ENCODE measurements at regions of chr5 and their contacts with region 1.

Region 1: DNA sequence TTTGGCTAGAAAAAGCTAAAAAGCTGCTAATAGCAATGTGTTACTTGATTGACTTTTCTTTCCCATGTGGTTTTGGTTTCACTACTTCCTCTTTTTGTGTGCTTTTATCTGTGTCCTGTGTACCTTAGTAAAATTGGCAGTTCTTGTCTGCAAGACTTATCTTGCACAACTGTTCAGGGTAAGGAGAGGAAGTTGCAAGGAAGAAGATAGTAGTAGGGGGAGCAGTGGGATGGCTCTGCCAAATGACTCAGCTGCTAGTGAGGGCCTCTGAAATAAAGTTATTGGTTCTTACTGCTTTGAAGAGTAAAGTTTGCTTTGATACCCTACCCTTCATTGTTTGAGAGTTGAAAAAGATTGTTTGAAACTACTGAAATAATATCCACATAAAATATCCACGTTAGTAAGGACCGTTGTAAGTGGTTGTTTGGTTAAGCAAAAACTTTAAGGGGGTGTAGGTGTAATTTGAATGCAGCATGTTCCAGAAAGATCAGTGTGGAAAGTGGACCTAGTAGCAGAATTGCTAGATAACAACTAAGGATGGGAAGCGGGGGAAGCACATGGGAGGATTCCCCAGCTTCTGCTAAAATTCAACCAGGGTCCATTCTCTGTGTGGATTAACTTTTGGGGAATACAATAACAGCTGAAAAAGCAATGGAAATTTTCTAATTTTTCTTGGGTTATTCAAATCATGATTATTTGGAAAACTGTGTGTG is 123.5 kb downstream of the SCAMP1 start:
- DNase-seq: peak; percentile 84 to 92 (median 89)
- H3K4me3 ChIP-seq: peak overlapping the region in 1 of 3 experiments; percentile 37
- H3K4me3 Mint-ChIP-seq: peak overlapping the region in 1 of 2 donors; percentile 65
- H3K27ac ChIP-seq: peak overlapping the region; percentile 19 to 82
- H3K27ac Mint-ChIP-seq: peak overlapping the region; percentile 87 to 94 (median 93)
- H3K4me1 ChIP-seq: peaks cover 39 to 46% of the 10 kb centered on the region in 2 donors
- H3K4me1 Mint-ChIP-seq: peaks cover 51% of the 10 kb centered on the region
- H3K27me3 ChIP-seq: no peaks in the 10 kb centered on the region
- H3K27me3 Mint-ChIP-seq: no peaks in the 10 kb centered on the region
- CTCF ChIP-seq: no peak

Region 2: DNA sequence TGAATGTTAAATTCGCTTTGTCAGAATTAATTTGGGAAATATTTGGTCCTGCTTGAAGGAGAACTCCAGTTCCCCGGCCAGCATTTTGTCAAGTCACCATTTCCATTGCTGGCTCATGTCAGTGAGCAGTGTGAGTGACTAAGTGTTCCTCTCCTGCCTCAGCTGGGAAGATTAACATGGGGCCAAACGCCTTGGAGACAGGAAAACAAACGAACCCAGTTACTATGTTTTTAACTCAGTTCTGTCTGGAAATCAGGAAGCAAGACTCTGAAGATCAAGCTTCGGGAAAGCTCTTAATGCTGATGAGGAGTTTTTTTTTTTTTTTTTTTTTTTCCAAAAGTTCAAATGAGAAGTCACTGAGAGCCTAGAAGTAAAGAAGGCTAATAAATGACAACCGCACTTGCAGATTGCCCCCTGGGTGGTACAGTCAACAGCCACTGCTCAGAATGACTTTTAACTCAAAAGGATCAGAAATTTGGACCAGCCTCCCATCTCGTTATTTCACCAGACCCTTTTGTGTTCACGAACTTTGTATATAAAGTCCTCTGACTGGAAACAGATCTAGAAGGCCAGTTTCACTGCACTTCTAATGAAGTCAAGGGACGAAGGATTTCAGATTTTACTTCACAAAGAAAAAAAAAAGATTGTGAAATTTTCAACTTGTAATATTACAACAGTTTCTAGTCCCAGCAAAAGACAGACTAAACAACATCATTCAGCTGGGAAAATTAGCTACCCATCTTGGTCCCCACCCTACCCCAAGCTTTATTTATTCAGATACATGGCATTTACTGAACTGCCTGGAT is 43.3 kb after region 1 on chr5:
- intact Hi-C with region 1: loop called in 1 of 2 experiments (anchors 5 kb)
- DNase-seq: peak; percentile 91 to 99 (median 98)
- H3K4me3 ChIP-seq: peak overlapping the region in 1 of 3 experiments; percentile 18
- H3K4me3 Mint-ChIP-seq: peak overlapping the region in 1 of 2 donors; percentile 15
- H3K27ac ChIP-seq: peak overlapping the region; percentile 67 to 93
- H3K27ac Mint-ChIP-seq: peak overlapping the region; percentile 93 to 98 (median 96)
- H3K4me1 ChIP-seq: peaks cover 48 to 56% of the 10 kb centered on the region in 2 donors
- H3K4me1 Mint-ChIP-seq: peaks cover 60% of the 10 kb centered on the region
- H3K27me3 ChIP-seq: no peaks in the 10 kb centered on the region
- H3K27me3 Mint-ChIP-seq: peaks cover 0 to 1% (median 1%) of the 10 kb centered on the region in 3 donors
- CTCF ChIP-seq: no peak

Region 3: DNA sequence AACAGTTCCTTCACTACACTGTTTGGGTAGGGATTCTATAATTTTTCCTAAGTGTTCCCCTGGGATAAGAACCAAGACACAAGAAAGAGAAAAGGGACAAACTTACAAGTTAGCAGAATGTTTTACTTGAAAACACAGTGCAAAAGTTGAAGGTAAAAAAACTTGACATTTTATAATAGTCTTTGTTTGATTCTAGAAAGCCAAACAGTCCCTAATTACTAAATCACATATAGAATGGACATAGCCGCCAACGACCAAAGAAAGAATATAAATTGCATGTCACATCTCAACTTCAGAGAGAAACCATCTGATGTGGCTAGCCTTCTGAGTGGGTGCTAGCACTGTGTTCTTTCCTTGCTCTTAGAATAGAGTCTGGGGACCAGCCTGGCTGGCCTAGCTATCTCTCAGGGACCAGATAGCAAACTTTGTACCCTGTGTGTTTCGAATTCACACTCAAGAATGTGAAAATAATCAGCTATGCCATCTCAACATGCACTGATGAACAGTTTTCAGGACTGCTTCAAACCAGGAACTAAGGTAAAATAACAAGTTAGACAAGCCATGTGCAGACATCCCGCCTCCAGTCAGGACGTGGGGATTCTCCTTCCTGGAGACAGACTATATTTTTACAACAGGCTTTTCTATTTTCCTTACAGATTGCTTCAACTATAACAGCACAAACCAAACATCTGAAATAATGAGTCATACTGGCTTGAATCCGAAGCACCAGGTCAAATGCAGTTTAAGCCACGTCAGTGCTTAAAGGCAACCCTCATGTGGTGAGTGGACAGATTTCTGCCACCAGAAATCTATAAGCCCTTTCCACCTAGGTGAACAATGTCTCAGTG is 110.9 kb after region 1 on chr5:
- intact Hi-C with region 1: loop called in 1 of 2 experiments (anchors 10 kb)
- DNase-seq: peak in 2 of 3 donors; percentile 32 to 68
- H3K4me3 ChIP-seq: no peak overlapping the region
- H3K4me3 Mint-ChIP-seq: peak overlapping the region in 1 of 2 donors; percentile 16
- H3K27ac ChIP-seq: no peak overlapping the region
- H3K27ac Mint-ChIP-seq: peak overlapping the region in 5 of 7 donors; percentile 25 to 87 (median 67)
- H3K4me1 ChIP-seq: peaks cover 22 to 54% of the 10 kb centered on the region in 2 donors
- H3K4me1 Mint-ChIP-seq: peaks cover 56% of the 10 kb centered on the region
- H3K27me3 ChIP-seq: no peaks in the 10 kb centered on the region
- H3K27me3 Mint-ChIP-seq: peaks cover 0 to 3% (median 0%) of the 10 kb centered on the region in 3 donors
- CTCF ChIP-seq: no peak

Region 4: DNA sequence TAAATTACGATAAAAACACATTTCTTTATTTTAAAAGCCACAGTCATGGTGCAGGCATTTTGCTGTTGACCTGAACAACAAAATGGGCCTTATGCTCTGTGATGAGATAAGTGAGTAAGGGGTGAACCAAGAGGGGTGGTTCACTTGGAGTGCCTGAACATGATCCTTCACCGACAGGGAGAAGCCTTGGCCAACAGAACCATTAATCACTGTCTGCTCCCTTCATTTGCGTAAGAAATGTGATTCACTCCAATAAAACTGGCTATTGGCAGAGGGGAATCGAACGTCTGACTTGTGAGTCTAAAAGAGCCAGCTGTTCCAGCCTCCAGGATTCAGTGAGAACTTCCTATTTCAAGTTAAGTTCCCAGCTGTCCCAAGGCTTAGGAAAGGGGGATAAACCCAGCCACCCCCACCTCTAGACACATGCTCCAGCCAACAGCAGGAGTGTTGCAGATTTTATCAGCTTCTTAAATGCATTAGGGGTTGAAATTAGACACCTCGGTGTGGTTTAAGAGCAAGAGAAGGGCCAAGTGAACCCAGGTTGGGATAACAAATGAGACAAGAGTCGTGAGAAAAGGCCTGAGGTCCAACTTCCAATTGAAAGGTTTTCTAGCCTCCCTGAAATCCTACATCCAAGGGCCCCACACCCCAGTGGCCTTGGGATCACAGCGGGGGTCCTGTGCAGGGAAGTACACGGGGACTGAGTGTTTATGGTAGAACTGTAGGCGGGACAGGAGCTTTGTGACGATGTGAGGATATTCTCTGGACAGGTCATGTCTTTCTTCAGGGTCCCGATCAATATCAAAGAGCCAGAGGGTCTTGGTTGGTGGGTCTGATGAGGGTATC is 296.0 kb after region 1 on chr5:
- intact Hi-C with region 1: loop called in 1 of 2 experiments (anchors 10 kb)
- DNase-seq: no peak
- H3K4me3 ChIP-seq: no peak overlapping the region
- H3K4me3 Mint-ChIP-seq: no peak overlapping the region
- H3K27ac ChIP-seq: no peak overlapping the region
- H3K27ac Mint-ChIP-seq: peak overlapping the region in 2 of 7 donors; percentile 3 to 47
- H3K4me1 ChIP-seq: no peaks in the 10 kb centered on the region
- H3K4me1 Mint-ChIP-seq: no peaks in the 10 kb centered on the region
- H3K27me3 ChIP-seq: no peaks in the 10 kb centered on the region
- H3K27me3 Mint-ChIP-seq: peaks cover 0 to 1% (median 0%) of the 10 kb centered on the region in 3 donors
- CTCF ChIP-seq: no peak

Measured in CD14-positive monocyte (primary cell).